Activated T-helper 2 cell treated with anti-CD3 and anti-CD28 coated beads, Interferon-gamma antibody, Interleukin-2, Interleukin-4, amounts not matched to agents 10 μg/mL and 5 μg/mL and 100 μg/mL, durations not matched to agents 14 hours and 24 hours and 36 hours (primary cell): ENCODE measurements at regions of chr1 and their contacts with region 1.

Region 1: GRCh38 chr1:211578640-211579433 is at the start of gene SLC30A1:
- DNase-seq: peak; percentile 99
- H3K4me3 Mint-ChIP-seq: peak within 1 kb of the TSS; percentile 91
- H3K27ac Mint-ChIP-seq: peak within 1 kb of the TSS; percentile 86
- H3K4me1 Mint-ChIP-seq: peaks cover 41% of the 10 kb centered on the region
- H3K27me3 Mint-ChIP-seq: no peaks in the 10 kb centered on the region
- total RNA-seq, gene SLC30A1: 7.9 and 8.0 TPM in 2 replicates

Region 2: GRCh38 chr1:211382714-211383480 is 195.9 kb before region 1 on chr1:
- intact Hi-C with region 1: loop called (anchors 5 kb)
- DNase-seq: peak; percentile 79
- H3K4me3 Mint-ChIP-seq: peak overlapping the region; percentile 85
- H3K27ac Mint-ChIP-seq: peak overlapping the region; percentile 96
- H3K4me1 Mint-ChIP-seq: peaks cover 52% of the 10 kb centered on the region
- H3K27me3 Mint-ChIP-seq: no peaks in the 10 kb centered on the region

Region 3: GRCh38 chr1:211625040-211625439 is 46.2 kb after region 1 on chr1:
- intact Hi-C with region 1: loop called (anchors 2 kb)
- DNase-seq: no peak
- H3K4me3 Mint-ChIP-seq: no peak overlapping the region
- H3K27ac Mint-ChIP-seq: no peak overlapping the region
- H3K4me1 Mint-ChIP-seq: peaks cover 18% of the 10 kb centered on the region
- H3K27me3 Mint-ChIP-seq: peaks cover 10% of the 10 kb centered on the region

Region 4: DNA sequence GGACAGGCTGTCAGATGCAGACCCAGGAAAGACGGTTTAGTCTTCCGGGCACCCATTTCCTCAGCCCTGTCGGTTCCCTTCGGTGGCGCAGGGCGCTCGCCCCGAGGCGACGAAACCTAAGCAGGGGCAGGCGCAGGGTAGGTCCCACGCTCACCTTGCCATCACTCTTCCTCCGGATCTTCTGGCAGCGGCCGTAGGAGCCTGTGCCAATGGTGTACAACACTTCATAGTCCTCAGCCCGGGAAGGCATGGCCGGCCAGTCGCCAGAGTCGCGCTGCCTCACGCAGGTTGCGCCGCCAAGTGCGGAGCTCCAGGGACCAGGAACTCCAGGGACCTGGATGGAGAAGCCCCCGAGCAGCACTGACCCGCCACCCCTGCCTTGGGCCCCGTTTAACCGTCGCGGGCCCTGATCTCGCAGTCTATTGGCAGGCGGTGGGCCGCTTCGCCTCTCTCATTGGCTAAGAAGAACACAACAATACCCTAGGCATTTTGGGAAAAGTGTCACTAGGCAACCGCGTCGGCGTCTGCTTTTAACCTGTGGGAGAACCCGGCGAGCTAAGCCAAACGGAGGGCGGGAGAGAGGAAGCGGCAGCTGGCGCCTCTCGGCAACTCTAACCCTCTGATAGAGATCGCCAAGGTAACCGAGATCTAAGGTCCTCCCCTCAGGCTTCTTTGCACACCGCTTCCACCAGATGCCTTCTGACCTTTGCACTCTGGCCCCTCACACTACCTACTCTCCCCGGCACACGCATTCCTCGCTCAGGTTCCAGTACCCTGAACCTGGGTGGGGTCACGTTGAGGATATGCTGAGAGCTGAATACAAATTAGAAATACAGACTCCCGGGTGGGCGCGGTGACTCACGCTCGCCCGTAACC is 96.6 kb after region 1 on chr1 and contains the start of gene NEK2:
- intact Hi-C with region 1: loop called (anchors 2 kb)
- DNase-seq: peak; percentile 89
- H3K4me3 Mint-ChIP-seq: peak within 1 kb of the TSS; percentile 95
- H3K27ac Mint-ChIP-seq: peak within 1 kb of the TSS; percentile 82
- H3K4me1 Mint-ChIP-seq: peaks cover 35% of the 10 kb centered on the region
- H3K27me3 Mint-ChIP-seq: peaks cover 2% of the 10 kb centered on the region
- total RNA-seq, gene NEK2: 21.8 and 24.1 TPM in 2 replicates

Region 5: GRCh38 chr1:211908453-211908852 is 329.6 kb after region 1 on chr1:
- intact Hi-C with region 1: no loop called
- DNase-seq: no peak
- H3K4me3 Mint-ChIP-seq: no peak overlapping the region
- H3K27ac Mint-ChIP-seq: no peak overlapping the region
- H3K4me1 Mint-ChIP-seq: no peaks in the 10 kb centered on the region
- H3K27me3 Mint-ChIP-seq: peaks cover 21% of the 10 kb centered on the region

Region 6: GRCh38 chr1:211935448-211935970 is 356.7 kb after region 1 on chr1:
- intact Hi-C with region 1: loop called (anchors 1 kb)
- DNase-seq: no peak
- H3K4me3 Mint-ChIP-seq: peak overlapping the region; percentile 3
- H3K27ac Mint-ChIP-seq: peak overlapping the region; percentile 6
- H3K4me1 Mint-ChIP-seq: peaks cover 43% of the 10 kb centered on the region
- H3K27me3 Mint-ChIP-seq: peaks cover 2% of the 10 kb centered on the region